WTC11 (cell line): ENCODE measurements at regions of chr3 and their contacts with region 1.

Region 1: DNA sequence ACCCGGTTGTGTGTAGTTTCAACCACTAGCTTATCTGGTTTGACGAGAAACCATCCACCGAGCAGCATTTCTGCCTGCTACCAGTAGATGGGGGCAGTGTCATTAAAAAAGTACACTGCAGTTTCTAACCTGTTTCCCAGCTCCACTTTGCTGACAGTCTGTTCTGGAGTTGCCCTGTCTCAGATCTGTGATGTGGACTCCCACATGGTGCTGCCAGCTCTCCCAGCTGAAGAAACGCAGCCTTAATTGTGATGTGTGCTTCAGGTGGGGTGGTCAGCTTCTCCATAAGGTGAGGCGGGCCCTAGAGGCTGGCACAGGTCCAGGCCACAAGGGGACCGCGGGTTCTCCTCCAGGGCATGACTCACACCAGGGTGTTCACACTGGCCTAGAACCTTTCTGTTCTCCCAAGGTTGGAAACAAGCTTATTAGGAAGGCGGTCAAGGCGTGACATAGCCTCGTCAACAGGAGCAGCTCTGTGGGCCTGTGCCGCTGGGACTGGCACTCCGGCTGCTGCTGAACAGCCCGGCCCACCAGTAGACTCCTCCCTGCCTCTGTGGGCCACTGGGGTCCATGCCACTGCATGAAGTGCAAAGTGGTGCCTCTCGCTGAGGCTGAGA is 2.9 kb upstream of the FAM43A start:
- DNase-seq: peak; percentile 79
- ATAC-seq: peak; percentile 47
- H3K4me3 Mint-ChIP-seq: no peak overlapping the region
- H3K27ac Mint-ChIP-seq: no peak overlapping the region
- H3K4me1 Mint-ChIP-seq: peaks cover 10% of the 10 kb centered on the region
- H3K27me3 Mint-ChIP-seq: peaks cover 46% of the 10 kb centered on the region
- CTCF ChIP-seq: peak; percentile 62

Region 2: GRCh38 chr3:194364652-194365434 is 318.0 kb before region 1 on chr3:
- CTCF ChIA-PET with region 1: no interaction called
- POLR2A ChIA-PET with region 1: no interaction called
- DNase-seq: no peak
- ATAC-seq: peak; percentile 18; the same call in 1 of the 2 replicates
- H3K4me3 Mint-ChIP-seq: no peak overlapping the region
- H3K27ac Mint-ChIP-seq: no peak overlapping the region
- H3K4me1 Mint-ChIP-seq: peaks cover 14% of the 10 kb centered on the region
- H3K27me3 Mint-ChIP-seq: peaks cover 18% of the 10 kb centered on the region
- CTCF ChIP-seq: no peak

Region 3: DNA sequence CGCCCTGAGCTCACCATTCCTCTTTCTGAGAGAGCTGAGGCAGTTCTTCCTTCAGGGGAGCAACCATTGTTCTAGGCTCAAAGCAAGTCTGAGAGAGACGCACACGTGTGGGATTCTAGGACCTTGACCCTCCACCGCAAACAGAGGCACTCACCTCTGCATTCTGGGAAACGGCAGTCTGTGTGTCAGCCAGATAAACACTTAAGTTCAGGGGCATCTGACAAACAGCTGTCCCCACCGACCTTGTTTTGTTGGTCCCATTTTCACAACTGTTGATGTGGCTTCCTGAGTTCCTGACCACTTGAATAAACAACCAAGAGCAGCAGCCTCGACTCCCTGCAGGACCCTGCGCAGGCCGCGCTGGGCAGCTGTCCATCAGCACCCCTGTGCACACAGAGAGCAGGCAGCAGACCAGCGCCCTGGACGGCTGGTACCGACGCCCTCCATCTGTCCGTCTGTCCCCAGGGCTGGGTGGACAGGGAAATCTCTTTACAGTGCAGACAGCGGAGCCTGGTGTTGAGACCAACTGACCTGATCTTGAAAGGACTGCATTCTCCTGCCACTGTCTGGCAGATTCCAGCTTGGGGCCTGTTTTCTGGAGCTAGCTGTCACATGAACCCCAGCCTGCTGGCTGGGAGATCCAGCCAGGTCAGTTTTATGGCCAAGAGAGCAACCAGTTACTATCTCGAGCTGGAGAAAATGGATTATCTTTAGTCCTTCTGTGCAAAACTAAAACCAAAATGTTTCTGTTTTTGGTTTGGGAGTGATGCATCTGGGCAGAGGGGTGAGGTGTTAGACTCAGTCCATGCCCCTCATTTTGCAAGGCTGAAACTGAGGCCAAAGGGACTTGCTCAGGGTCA is 67.1 kb after region 1 on chr3:
- CTCF ChIA-PET with region 1: interaction called, 25 read pairs
- POLR2A ChIA-PET with region 1: interaction called, 3 read pairs
- DNase-seq: no peak
- ATAC-seq: peak; percentile 16; the same call in 1 of the 2 replicates
- H3K4me3 Mint-ChIP-seq: no peak overlapping the region
- H3K27ac Mint-ChIP-seq: peak overlapping the region; percentile 79; the same call in 1 of the 2 replicates
- H3K4me1 Mint-ChIP-seq: peaks cover 38% of the 10 kb centered on the region
- H3K27me3 Mint-ChIP-seq: peaks cover 6% of the 10 kb centered on the region; the same call in 1 of the 2 replicates
- CTCF ChIP-seq: no peak

Region 4: GRCh38 chr3:194941761-194942483 is 259.1 kb after region 1 on chr3:
- CTCF ChIA-PET with region 1: interaction called, 17 read pairs
- POLR2A ChIA-PET with region 1: no interaction called
- DNase-seq: no peak
- ATAC-seq: no peak
- H3K4me3 Mint-ChIP-seq: no peak overlapping the region
- H3K27ac Mint-ChIP-seq: no peak overlapping the region
- H3K4me1 Mint-ChIP-seq: peaks cover 9% of the 10 kb centered on the region
- H3K27me3 Mint-ChIP-seq: no peaks in the 10 kb centered on the region
- CTCF ChIP-seq: no peak

Region 5: DNA sequence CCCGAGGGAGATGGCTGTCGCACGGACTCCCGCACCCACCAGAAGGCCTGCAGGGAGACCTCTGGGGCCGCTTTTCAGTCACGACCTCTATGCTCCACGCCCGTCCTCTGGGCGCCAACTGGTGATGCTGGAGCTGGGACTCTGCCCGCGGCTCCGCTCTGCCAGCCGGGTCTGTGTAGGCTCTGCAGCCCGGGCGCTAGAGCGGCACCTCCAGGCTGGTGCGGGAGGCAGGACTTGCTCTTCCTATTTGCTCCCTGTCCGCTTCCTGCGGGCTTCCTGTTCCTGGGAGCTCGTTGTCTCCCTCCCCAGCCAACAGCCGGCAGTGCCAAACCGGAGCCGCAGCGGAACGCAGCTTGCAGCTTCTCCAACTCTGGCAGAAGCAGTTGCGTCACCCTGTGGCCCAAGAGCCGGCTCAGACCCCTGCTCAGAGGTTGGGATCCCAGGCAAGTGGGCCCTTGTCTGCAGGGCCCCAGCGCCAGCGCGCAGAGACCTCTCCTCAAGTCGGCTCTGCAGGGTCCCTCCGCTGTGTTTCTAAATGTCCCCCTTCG is 302.3 kb after region 1 on chr3:
- CTCF ChIA-PET with region 1: interaction called, 46 read pairs
- POLR2A ChIA-PET with region 1: interaction called, 5 read pairs
- DNase-seq: peak; percentile 83
- ATAC-seq: peak; percentile 98
- H3K4me3 Mint-ChIP-seq: peak overlapping the region; percentile 46
- H3K27ac Mint-ChIP-seq: no peak overlapping the region
- H3K4me1 Mint-ChIP-seq: peaks cover 4% of the 10 kb centered on the region; the same call in 1 of the 2 replicates
- H3K27me3 Mint-ChIP-seq: peaks cover 14% of the 10 kb centered on the region
- CTCF ChIP-seq: no peak

Region 6: DNA sequence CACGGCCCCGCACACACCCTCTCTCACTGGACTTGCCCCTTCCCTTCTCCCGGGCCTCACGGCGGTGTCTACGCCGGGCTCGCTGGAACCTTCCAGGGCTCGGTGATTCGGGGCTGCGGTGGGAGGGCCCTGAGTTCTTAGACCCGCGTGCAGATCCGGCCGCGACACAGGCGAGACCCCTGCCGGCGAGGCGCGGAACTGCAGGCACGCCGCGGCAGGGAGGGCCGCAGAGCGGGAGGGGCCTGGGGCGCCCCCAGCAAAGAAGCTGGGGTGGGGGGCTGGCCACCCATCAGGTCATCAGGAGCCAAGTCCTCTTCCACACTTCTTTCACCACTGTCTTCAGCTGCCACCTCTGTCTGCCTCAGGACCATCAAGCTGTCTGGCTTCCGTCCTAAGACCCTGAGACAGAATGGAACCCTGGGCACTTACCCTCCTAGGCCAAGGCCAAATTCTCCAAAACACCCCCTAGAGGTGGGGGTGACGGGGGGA is 423.7 kb after region 1 on chr3:
- CTCF ChIA-PET with region 1: interaction called, 20 read pairs
- POLR2A ChIA-PET with region 1: no interaction called
- DNase-seq: peak; percentile 78
- ATAC-seq: peak; percentile 86
- H3K4me3 Mint-ChIP-seq: peak overlapping the region; percentile 57
- H3K27ac Mint-ChIP-seq: no peak overlapping the region
- H3K4me1 Mint-ChIP-seq: peaks cover 30% of the 10 kb centered on the region
- H3K27me3 Mint-ChIP-seq: no peaks in the 10 kb centered on the region
- CTCF ChIP-seq: peak; percentile 100